ENCODE measurements at regions of chr22 and their contacts with region 1.

Region 1: DNA sequence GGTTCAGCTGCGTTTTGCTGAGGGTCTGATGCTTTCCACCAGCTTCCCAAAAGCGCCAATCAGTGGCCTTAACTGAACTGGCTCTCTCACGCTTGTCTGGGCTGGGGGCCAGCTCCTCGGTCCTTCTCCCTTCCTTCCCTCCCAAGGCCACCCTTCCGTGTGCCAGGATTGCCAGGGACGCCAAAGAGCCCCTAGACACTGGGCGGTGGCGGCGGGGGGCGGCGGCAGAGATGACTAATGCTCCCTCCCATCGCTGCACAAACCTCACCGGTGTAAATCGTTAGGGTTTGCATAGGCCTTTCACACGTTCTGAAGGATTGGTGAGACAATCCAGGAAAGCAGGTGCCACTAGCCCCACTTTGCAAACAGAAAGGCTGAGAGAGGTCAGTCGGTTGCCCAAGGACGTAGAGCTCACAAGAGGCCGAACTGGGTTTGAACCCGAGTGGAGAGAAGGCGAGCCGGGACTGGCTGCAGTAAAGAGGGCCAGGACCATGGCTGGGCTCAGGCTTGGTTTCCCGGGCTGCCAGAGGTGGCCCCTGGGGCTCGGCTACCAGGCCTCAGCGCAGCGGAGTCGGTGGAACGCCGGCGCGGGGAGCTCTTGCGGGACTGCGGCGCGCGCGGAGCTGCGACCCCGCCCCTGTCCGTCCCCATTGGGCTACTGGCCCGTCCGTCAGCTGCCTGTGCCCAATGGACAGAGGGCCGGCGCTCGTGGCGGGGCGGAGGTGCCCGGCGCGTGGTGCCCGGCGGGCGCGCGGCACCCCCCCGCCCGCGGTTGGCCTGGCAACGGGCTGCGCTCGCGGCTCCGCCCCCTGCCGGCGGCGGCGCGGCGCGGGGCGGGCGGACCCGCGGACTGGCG is 589 bp upstream of the GNAZ start:
- DNase-seq: peak; percentile 94 to 95
- ATAC-seq: peak; percentile 97 to 98 (median 97)
- H3K4me3 ChIP-seq: peak overlapping the region; percentile 41
- H3K4me3 Mint-ChIP-seq: peak overlapping the region; percentile 87
- H3K27ac ChIP-seq: no peak overlapping the region
- H3K27ac Mint-ChIP-seq: peak overlapping the region in 1 of 2 donors; percentile 76
- H3K4me1 ChIP-seq: peaks cover 16% of the 10 kb centered on the region
- H3K4me1 Mint-ChIP-seq: peaks cover 20 to 34% of the 10 kb centered on the region in 2 donors
- H3K27me3 ChIP-seq: peaks cover 7% of the 10 kb centered on the region
- H3K27me3 Mint-ChIP-seq: peaks cover 0 to 13% of the 10 kb centered on the region in 2 donors
- CTCF ChIP-seq: no peak

Region 2: DNA sequence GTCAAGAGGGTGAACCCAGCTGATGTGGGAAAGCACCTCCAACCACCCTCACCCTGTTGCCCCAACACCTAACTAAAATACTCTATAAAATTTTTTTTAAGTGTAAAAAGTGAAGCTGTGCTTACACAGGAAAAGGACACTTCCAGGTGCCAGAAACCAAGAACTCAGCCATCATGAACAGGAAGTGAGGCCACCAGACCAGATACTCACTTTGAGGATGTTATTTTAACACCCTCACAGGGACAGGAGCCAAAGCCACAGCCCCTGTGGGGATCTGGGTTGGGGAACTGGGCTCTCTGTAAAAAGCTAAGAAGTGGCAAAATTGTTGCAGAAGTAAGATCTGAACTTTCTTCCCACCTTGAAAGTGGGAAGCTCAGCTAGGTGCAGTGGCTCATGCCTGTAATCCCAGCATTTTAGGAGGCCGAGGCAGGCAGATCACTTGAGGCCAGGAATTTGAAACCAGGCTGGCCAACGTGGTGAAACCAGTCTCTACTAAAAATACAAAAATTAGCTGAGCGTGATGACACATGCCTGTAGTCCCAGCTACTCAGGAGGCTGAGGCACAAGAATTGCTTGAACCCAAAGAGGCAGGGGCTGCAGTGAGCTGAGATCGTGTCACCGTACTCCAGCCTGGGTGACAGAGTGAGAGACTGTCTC is 68.3 kb after region 1 on chr22:
- intact Hi-C with region 1: loop called (anchors 5 kb)
- DNase-seq: peak; percentile 70 to 87
- ATAC-seq: peak; percentile 62 to 85 (median 76)
- H3K4me3 ChIP-seq: no peak overlapping the region
- H3K4me3 Mint-ChIP-seq: peak overlapping the region; percentile 87
- H3K27ac ChIP-seq: peak overlapping the region; percentile 89
- H3K27ac Mint-ChIP-seq: peak overlapping the region; percentile 96 to 99
- H3K4me1 ChIP-seq: peaks cover 92% of the 10 kb centered on the region
- H3K4me1 Mint-ChIP-seq: peaks cover 37 to 72% of the 10 kb centered on the region in 2 donors
- H3K27me3 ChIP-seq: no peaks in the 10 kb centered on the region
- H3K27me3 Mint-ChIP-seq: no peaks in the 10 kb centered on the region
- CTCF ChIP-seq: no peak